Activated CD8-positive, alpha-beta T cell treated with anti-CD3 and anti-CD28 coated beads, Interleukin-2, amount 10 ng/mL, durations not matched to agents 7 days and 5 days (primary cell): ENCODE measurements at regions of chr18 and their contacts with region 1.

Region 1: GRCh38 chr18:58529714-58530354 is 99.1 kb downstream of the ALPK2 start:
- DNase-seq: peak; percentile 76
- ATAC-seq: no peak
- H3K4me3 Mint-ChIP-seq: no peak overlapping the region
- H3K27ac Mint-ChIP-seq: no peak overlapping the region
- H3K4me1 Mint-ChIP-seq: peaks cover 10% of the 10 kb centered on the region
- H3K27me3 Mint-ChIP-seq: peaks cover 21% of the 10 kb centered on the region

Region 2: GRCh38 chr18:58429442-58429841 is 100.4 kb before region 1 on chr18:
- CTCF ChIA-PET with region 1: no interaction called
- POLR2A ChIA-PET with region 1: no interaction called
- DNase-seq: no peak
- ATAC-seq: no peak
- H3K4me3 Mint-ChIP-seq: no peak overlapping the region
- H3K27ac Mint-ChIP-seq: no peak overlapping the region
- H3K4me1 Mint-ChIP-seq: no peaks in the 10 kb centered on the region
- H3K27me3 Mint-ChIP-seq: peaks cover 4% of the 10 kb centered on the region

Region 3: GRCh38 chr18:58541789-58542425 is 12.1 kb after region 1 on chr18:
- CTCF ChIA-PET with region 1: interaction called, 40 read pairs
- POLR2A ChIA-PET with region 1: interaction called, 4 read pairs
- DNase-seq: peak; percentile 51
- ATAC-seq: peak; percentile 85
- H3K4me3 Mint-ChIP-seq: no peak overlapping the region
- H3K27ac Mint-ChIP-seq: peak overlapping the region; percentile 35
- H3K4me1 Mint-ChIP-seq: peaks cover 40% of the 10 kb centered on the region
- H3K27me3 Mint-ChIP-seq: peaks cover 3% of the 10 kb centered on the region

Region 4: GRCh38 chr18:58657494-58657893 is 127.7 kb after region 1 on chr18:
- CTCF ChIA-PET with region 1: interaction called, 10 read pairs
- POLR2A ChIA-PET with region 1: no interaction called
- DNase-seq: no peak
- ATAC-seq: no peak
- H3K4me3 Mint-ChIP-seq: peak overlapping the region; percentile 70
- H3K27ac Mint-ChIP-seq: peak overlapping the region; percentile 96
- H3K4me1 Mint-ChIP-seq: peaks cover 67% of the 10 kb centered on the region
- H3K27me3 Mint-ChIP-seq: no peaks in the 10 kb centered on the region

Region 5: GRCh38 chr18:58754544-58755068 is 224.8 kb after region 1 on chr18:
- CTCF ChIA-PET with region 1: interaction called, 415 read pairs
- POLR2A ChIA-PET with region 1: no interaction called
- DNase-seq: no peak
- ATAC-seq: peak; percentile 49
- H3K4me3 Mint-ChIP-seq: peak overlapping the region; percentile 23
- H3K27ac Mint-ChIP-seq: peak overlapping the region; percentile 75
- H3K4me1 Mint-ChIP-seq: peaks cover 43% of the 10 kb centered on the region
- H3K27me3 Mint-ChIP-seq: peaks cover 3% of the 10 kb centered on the region